ENCODE measurements at regions of chr3 and their contacts with region 1.

Region 1: DNA sequence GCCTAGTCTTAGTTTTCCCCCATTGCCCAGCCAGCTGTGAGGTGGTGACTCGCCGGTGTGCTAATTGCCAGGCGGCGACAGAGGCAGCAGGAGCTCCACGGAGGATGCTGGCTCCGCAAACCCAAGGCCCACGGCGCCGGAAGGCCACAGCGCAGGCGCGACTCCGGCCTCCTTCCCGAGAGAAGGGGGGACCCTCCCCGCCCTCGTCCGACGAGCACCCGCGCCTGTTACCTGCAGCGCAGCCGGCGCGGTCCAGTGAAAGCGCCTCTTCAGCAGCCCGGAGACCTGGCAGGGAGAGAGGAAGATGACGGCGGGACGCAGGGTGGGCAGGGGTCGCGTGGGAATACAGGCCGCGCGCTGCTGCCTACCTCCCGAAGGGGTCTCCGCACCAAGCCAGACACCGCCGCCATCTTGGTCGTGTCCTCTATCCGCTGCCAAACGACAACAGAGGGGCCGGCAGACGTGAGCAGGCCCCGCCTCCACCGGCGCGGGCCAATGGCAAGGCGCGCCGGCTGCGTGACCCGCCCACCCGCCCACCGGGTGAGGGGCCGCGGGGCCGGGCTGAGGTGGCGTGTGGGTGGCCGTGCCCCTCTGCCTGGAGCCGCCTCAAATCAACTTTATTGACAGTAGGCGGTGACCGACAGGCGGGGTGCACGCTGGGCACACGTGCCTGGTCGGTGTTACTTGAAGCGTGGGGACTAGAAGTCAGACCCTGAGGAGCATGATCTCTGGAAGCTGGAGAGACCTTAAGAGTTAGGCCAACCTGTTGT is at the start of gene PDHB:
- DNase-seq: peak; percentile 71 to 87
- H3K4me3 ChIP-seq: peak within 1 kb of the TSS; percentile 65 to 96 (median 89)
- H3K27ac ChIP-seq: peak within 1 kb of the TSS; percentile 94
- H3K4me1 ChIP-seq: peaks cover 0 to 21% (median 12%) of the 10 kb centered on the region in 4 experiments; a peak in 5 of 7 replicates
- H3K27me3 ChIP-seq: no peaks in the 10 kb centered on the region
- CTCF ChIP-seq: no peak
- EP300 ChIP-seq: peak in 1 of 2 experiments; percentile 39; a peak in 1 of 3 replicates
- POLR2A ChIP-seq: peak; percentile 76 to 85
- RAD21 ChIP-seq: no peak
- total RNA-seq, gene PDHB: 132 and 140 TPM in 2 replicates

Region 2: DNA sequence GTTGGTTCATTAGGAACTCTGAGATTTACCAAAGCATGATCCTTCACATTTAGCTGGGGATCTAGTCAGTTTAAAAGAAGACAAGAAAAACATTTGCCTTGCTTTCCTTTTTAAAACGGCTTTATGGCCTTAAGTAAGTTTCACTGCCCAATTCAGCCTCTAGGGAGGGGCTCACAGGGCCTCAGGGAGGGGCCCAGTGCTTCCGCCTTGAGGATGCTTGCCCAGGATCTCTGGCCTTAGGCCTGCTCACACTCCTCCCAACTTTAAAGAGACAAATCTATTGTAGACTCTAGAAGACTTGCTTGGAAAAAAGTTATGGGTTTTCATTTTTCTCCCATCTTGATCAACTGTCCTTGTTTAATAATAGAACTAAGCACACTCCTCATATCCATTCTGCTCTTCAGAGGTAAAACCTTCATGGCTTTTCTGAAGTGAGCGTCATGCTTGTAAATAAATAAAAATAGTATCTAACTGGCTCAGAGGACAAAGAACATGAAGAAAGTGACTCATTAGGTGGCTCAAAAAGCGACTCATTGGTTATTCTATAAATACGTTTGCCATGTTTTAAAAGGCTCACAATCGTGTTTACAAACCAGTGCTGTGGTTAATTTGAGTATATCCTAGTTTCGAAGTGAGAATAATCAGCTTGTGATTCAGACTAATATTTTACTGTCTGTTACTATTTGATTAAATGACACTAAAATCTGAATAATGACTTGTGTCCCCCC is 13.6 kb before region 1 on chr3:
- CTCF ChIA-PET with region 1: interaction called, 10 read pairs
- POLR2A ChIA-PET with region 1: interaction called, 30 read pairs
- DNase-seq: no peak
- H3K4me3 ChIP-seq: no peak overlapping the region
- H3K27ac ChIP-seq: no peak overlapping the region
- H3K4me1 ChIP-seq: peaks cover 0 to 4% (median 1%) of the 10 kb centered on the region in 4 experiments; a peak in 3 of 7 replicates
- H3K27me3 ChIP-seq: no peaks in the 10 kb centered on the region
- CTCF ChIP-seq: no peak
- EP300 ChIP-seq: no peak
- POLR2A ChIP-seq: no peak
- RAD21 ChIP-seq: no peak

Region 3: DNA sequence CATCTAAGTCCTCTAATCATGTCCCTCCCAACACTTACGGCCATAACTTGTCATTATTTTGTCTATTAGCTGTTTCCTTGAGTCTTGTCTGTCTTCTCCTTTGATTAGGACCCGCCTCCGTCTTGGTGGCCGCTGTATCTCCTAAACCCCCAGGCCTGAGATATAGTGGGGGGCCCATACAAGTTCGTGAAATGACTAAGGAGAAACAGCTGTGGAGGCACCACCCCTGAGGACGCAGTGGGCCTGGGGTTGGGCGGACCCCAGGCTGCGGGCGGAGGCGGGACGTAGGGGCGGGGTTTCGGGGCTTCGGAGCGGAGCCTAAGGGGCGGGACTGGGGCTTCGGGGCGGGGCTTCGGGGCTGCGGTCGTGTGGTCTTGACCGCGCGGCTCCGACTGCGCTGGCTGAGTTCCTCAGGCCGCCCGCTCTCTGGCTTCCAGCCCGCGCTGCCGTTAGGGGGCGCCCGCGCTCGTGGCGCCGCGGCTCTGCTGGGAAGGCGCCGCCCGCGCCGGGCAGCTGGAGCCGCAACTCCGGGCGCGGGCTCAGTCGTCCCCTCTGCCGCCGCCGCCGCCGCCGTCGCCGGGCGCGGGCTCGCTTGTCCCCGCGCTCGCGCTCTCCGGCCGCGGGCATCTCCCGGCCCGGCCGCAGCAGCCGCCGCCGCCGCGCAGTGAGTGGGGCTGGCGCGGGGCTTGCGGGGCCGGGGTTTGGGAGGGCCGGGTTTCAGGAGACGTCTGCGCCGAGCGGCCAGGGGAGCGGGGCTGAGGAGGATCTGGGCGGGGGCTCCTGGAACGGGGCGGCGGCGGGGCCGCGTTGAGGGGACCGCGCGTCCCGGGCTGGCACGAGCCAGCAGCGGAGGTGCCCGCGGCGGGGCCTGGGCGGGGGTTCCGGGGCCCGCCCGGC is 58.2 kb after region 1 on chr3 and contains the start of gene KCTD6:
- CTCF ChIA-PET with region 1: interaction called, 5 read pairs
- POLR2A ChIA-PET with region 1: interaction called, 17 read pairs
- DNase-seq: peak; percentile 87 to 95
- H3K4me3 ChIP-seq: peak within 1 kb of the TSS; percentile 78 to 88 (median 82)
- H3K27ac ChIP-seq: peak within 1 kb of the TSS; percentile 3; the same call in 1 of the 2 replicates
- H3K4me1 ChIP-seq: peaks cover 5 to 16% (median 6%) of the 10 kb centered on the region in 4 experiments
- H3K27me3 ChIP-seq: peaks cover 0 to 4% (median 0%) of the 10 kb centered on the region in 4 experiments; a peak in 1 of 7 replicates
- CTCF ChIP-seq: peak; percentile 73 to 96 (median 85)
- EP300 ChIP-seq: peak in 1 of 2 experiments; percentile 61; a peak in 1 of 3 replicates
- POLR2A ChIP-seq: peak in 1 of 2 experiments; percentile 48; a peak in 1 of 3 replicates
- RAD21 ChIP-seq: peak; percentile 57 to 73
- total RNA-seq, gene KCTD6: 21.4 and 22.2 TPM in 2 replicates

Region 4: GRCh38 chr3:58640700-58641372 is 207.3 kb after region 1 on chr3:
- CTCF ChIA-PET with region 1: no interaction called
- POLR2A ChIA-PET with region 1: no interaction called
- DNase-seq: peak; percentile 73 to 90
- H3K4me3 ChIP-seq: peak overlapping the region in 1 of 4 experiments; percentile 7; a peak in 1 of 8 replicates
- H3K27ac ChIP-seq: no peak overlapping the region
- H3K4me1 ChIP-seq: peaks cover 0 to 4% (median 0%) of the 10 kb centered on the region in 4 experiments; a peak in 3 of 7 replicates
- H3K27me3 ChIP-seq: peaks cover 15 to 53% (median 39%) of the 10 kb centered on the region in 4 experiments
- CTCF ChIP-seq: peak; percentile 92 to 97 (median 94)
- EP300 ChIP-seq: no peak
- POLR2A ChIP-seq: no peak
- RAD21 ChIP-seq: peak; percentile 100

Measured in H1 (cell line).